ENCODE measurements at regions of chr18 and their contacts with region 1.

Region 1: DNA sequence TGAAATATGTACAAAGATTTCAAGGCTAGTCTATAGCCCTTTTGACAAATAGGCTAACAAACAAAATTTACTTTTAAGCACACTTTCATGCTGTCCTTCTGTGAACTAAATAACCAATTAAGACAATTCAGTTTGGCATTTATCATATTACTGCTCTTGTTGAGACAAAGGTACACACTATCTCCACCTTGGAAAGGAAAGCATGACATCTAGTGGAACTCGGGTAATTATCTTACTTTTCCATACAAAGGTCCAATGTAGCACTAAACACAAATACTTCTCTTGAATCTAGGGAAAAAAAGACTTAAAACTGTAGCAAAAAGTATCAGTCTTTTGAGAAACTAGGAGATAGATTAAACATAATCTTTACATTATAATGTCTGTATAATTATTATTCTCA is 125.0 kb upstream of the CD226 start:
- DNase-seq: no peak
- ATAC-seq: peak in 2 of 8 donors; percentile 52 to 67
- H3K4me3 ChIP-seq: no peak overlapping the region
- H3K27ac ChIP-seq: no peak overlapping the region
- H3K4me1 ChIP-seq: no peaks in the 10 kb centered on the region
- H3K27me3 ChIP-seq: no peaks in the 10 kb centered on the region
- CTCF ChIP-seq: peak in 8 of 9 donors; percentile 5 to 62 (median 50)

Region 2: DNA sequence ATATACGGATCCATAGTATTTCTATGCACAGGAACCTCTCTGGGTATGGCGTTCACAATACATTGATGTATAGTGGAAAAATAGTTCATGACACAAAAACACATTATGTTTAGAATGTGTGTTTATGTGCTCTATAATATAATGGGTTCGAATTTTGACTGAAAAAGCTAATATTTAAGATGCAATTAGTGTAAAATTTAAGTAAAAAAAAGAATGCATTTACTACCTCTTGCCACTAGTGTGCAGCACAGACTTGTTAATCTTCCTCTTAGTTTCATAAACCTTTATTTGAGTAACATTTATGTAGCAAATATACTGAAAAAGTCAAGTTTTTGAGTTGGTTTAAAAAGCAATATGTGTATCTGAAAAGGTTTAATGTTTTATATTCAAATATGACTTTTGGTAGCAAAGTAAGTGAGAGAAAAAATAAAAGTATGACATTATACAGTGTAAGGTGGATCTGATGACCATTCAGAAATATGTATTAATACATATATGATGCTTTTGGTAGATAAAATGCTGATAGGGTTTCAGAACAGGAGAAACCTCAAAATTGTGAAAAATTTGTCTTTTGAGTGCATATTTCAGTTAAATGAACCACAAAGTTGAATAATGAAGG is 1225.3 kb before region 1 on chr18:
- intact Hi-C with region 1: loop called in 2 of 10 experiments (anchors 5 kb)
- DNase-seq: no peak
- ATAC-seq: peak in 1 of 8 donors; percentile 29
- H3K4me3 ChIP-seq: no peak overlapping the region
- H3K27ac ChIP-seq: no peak overlapping the region
- H3K4me1 ChIP-seq: no peaks in the 10 kb centered on the region
- H3K27me3 ChIP-seq: no peaks in the 10 kb centered on the region
- CTCF ChIP-seq: peak in 8 of 9 donors; percentile 35 to 73 (median 67)

Region 3: GRCh38 chr18:69636529-69637301 is 436.0 kb before region 1 on chr18:
- intact Hi-C with region 1: loop called in 2 of 10 experiments (anchors 5 kb)
- DNase-seq: peak in 1 of 2 donors; percentile 16
- ATAC-seq: peak in 6 of 8 donors; percentile 29 to 75 (median 68)
- H3K4me3 ChIP-seq: no peak overlapping the region
- H3K27ac ChIP-seq: no peak overlapping the region
- H3K4me1 ChIP-seq: no peaks in the 10 kb centered on the region
- H3K27me3 ChIP-seq: no peaks in the 10 kb centered on the region
- CTCF ChIP-seq: peak in 8 of 9 donors; percentile 10 to 57 (median 40)

Region 4: DNA sequence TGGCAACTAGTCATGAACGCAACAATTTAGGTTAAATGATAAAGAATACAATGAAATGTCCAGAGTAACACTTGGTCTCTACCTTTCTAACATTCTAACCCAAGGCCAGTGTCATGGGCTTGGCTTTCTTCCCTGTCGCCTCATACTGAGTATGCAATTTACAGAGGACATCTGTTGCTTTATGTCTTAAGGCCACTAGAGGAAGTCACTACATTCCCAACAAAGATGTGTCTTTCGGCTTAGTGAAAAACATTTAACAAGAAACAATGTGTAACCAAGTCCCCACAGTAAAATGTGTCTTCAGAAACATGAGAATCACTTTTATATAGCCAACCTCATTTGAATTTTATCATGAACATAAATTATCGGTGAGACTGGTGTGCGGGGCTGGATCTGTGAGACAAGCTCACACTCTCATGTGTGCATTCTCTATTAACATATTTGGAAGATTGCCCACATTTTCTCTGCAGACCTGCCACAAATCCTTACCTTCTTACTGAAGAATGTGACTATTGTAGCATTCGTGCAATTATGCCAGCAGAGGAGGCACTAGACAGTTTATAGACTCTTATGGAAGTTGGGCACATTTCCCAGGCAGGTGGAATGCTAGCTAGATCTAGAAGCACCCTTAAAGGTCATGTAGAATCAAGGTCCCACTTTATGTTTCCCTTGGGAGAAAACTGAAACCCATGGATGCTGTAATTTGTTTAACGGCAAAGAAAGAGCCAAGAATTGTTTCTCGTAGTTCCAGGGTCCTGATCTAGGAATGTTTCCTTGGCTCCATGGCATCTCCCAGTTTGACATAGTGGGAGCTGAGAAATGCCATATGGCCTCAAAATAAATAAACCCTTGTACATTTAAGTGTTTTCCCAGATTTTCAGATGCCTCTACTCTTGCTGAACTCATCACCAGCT is 226.8 kb before region 1 on chr18:
- intact Hi-C with region 1: loop called in 2 of 10 experiments (anchors 10 kb)
- DNase-seq: no peak
- ATAC-seq: peak in 5 of 8 donors; percentile 23 to 62 (median 50)
- H3K4me3 ChIP-seq: no peak overlapping the region
- H3K27ac ChIP-seq: no peak overlapping the region
- H3K4me1 ChIP-seq: peaks cover 0 to 17% (median 10%) of the 10 kb centered on the region in 9 donors
- H3K27me3 ChIP-seq: no peaks in the 10 kb centered on the region
- CTCF ChIP-seq: peak in 4 of 9 donors; percentile 5 to 15 (median 12)